ENCODE measurements at regions of chr3 and their contacts with region 1.

Region 1: GRCh38 chr3:16842272-16843270 is 42.2 kb upstream of the PLCL2 start:
- DNase-seq: peak; percentile 91
- H3K4me3 Mint-ChIP-seq: peak overlapping the region; percentile 72
- H3K27ac Mint-ChIP-seq: peak overlapping the region; percentile 93
- H3K4me1 Mint-ChIP-seq: peaks cover 68% of the 10 kb centered on the region
- H3K27me3 Mint-ChIP-seq: no peaks in the 10 kb centered on the region

Region 2: DNA sequence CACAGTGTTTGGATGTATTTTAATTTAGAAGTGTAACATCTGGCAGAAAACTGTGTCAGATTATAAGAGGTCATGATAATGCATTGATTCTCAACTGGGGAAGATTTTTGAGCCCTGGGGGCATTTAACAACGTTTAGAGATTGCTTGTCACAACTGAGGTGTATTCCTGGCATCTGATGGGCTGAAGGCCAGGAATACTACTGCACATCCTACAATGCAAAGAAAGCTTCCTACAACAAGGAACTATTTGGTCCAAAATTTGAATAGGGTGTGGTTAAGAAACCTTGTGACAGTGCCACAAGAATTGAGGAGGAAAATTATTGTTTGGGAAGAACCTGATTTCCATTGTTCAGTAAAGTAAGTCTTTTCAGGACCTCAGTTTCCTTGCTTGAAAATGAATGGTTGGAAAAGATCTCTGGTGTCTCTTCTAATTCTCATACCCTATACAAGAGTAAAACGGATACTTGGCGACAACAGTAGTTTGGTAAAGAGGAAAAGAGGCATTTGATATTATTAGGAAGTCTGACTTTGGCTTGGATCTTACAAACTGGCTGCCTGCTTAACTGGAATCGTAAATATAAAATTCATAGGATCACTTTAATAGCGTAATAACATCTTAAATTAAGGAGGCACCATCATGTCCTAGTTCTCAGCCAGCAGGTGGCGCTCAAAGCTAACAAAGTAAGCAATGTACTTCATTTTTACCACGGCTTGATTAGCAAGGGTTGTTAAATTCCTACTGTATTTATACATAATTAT is 241.6 kb before region 1 on chr3:
- CTCF ChIA-PET with region 1: no interaction called
- intact Hi-C with region 1: loop called (anchors 2 kb)
- DNase-seq: peak; percentile 90
- H3K4me3 Mint-ChIP-seq: no peak overlapping the region
- H3K27ac Mint-ChIP-seq: no peak overlapping the region
- H3K4me1 Mint-ChIP-seq: peaks cover 19% of the 10 kb centered on the region
- H3K27me3 Mint-ChIP-seq: no peaks in the 10 kb centered on the region

Region 3: GRCh38 chr3:16828815-16829214 is 13.8 kb before region 1 on chr3:
- CTCF ChIA-PET with region 1: interaction called, 6 read pairs
- intact Hi-C with region 1: loop called (anchors 1 kb)
- DNase-seq: peak; percentile 75
- H3K4me3 Mint-ChIP-seq: no peak overlapping the region
- H3K27ac Mint-ChIP-seq: no peak overlapping the region
- H3K4me1 Mint-ChIP-seq: peaks cover 18% of the 10 kb centered on the region
- H3K27me3 Mint-ChIP-seq: no peaks in the 10 kb centered on the region

Region 4: GRCh38 chr3:17023006-17023664 is 180.6 kb after region 1 on chr3:
- CTCF ChIA-PET with region 1: no interaction called
- intact Hi-C with region 1: loop called (anchors 1 kb)
- DNase-seq: peak; percentile 82
- H3K4me3 Mint-ChIP-seq: peak overlapping the region; percentile 60
- H3K27ac Mint-ChIP-seq: peak overlapping the region; percentile 90
- H3K4me1 Mint-ChIP-seq: peaks cover 73% of the 10 kb centered on the region
- H3K27me3 Mint-ChIP-seq: no peaks in the 10 kb centered on the region

Region 5: GRCh38 chr3:17132286-17133120 is 289.9 kb after region 1 on chr3:
- CTCF ChIA-PET with region 1: no interaction called
- intact Hi-C with region 1: no loop called
- DNase-seq: no peak
- H3K4me3 Mint-ChIP-seq: no peak overlapping the region
- H3K27ac Mint-ChIP-seq: no peak overlapping the region
- H3K4me1 Mint-ChIP-seq: no peaks in the 10 kb centered on the region
- H3K27me3 Mint-ChIP-seq: no peaks in the 10 kb centered on the region

Region 6: DNA sequence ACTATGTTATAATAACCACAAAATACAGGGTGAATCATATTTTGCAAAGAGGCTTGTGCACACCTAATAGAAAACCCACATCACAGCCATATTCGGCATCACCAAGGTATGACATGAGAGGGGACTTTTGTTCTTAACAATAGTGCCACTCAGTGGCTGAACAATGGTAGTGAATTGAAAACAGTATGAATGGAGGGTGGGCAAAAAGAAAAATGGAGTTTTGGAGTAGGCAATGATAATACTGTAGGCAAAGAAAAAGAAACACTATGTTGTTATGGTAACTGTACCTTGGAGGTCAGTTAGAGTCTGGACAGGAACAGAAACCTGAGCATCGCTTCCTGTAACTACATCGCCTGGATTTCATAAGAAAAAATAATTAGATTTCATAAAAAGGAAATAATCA is 390.8 kb after region 1 on chr3:
- CTCF ChIA-PET with region 1: no interaction called
- intact Hi-C with region 1: loop called (anchors 1 kb)
- DNase-seq: peak; percentile 51
- H3K4me3 Mint-ChIP-seq: no peak overlapping the region
- H3K27ac Mint-ChIP-seq: no peak overlapping the region
- H3K4me1 Mint-ChIP-seq: peaks cover 20% of the 10 kb centered on the region
- H3K27me3 Mint-ChIP-seq: no peaks in the 10 kb centered on the region

Region 7: GRCh38 chr3:17473761-17474160 is 631.2 kb after region 1 on chr3:
- CTCF ChIA-PET with region 1: no interaction called
- intact Hi-C with region 1: no loop called
- DNase-seq: no peak
- H3K4me3 Mint-ChIP-seq: no peak overlapping the region
- H3K27ac Mint-ChIP-seq: no peak overlapping the region
- H3K4me1 Mint-ChIP-seq: no peaks in the 10 kb centered on the region
- H3K27me3 Mint-ChIP-seq: no peaks in the 10 kb centered on the region